ENCODE measurements at regions of chr7 and their contacts with region 1.

Region 1: DNA sequence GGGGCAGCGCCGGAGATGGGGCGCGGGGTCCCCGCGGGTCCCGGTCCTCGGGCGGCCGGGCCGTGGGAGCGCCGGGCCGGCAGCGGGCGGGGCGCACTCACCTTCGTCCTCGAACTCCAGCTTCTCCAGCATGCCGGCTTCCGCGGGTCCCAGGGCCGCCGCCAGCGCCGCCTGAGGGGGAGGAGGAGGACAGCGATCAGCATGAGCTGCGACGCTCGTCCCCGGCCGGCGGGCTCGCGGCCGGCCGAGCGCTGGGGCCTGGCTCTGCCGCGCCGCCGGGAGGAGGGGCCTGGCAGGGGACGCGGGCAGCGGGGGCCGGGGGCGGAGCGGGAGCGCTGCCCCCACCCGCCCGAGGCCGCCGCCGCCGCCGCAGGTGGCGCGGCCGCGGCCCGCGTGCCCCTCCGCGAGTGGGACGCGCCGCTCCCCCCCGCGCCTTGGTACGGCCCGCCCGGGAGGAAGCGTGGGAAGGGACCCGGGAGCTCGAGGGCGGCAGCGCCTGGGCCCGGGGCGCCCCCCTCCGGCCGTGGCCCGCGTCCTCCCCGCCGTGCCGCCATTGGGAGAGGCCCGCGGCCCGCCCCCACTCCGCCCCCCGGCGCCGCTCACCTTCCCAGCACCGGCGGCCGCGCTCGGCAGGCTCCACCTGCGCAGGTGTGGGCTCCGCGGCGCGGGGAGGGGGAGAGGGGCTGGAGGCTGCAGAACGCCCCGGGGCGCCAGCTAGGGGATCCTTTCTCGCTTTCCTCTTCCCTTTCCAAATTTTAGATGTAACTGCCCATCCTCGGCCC is 112.5 kb upstream of the RHEB start:
- DNase-seq: peak; percentile 64
- ATAC-seq: peak; percentile 89
- H3K4me3 ChIP-seq: peak overlapping the region; percentile 94
- H3K27ac ChIP-seq: peak overlapping the region; percentile 65; the same call in 1 of the 2 replicates
- H3K4me1 ChIP-seq: no peaks in the 10 kb centered on the region; the same call in 1 of the 2 replicates
- H3K27me3 ChIP-seq: no peaks in the 10 kb centered on the region
- CTCF ChIP-seq: peak; percentile 62
- POLR2A ChIP-seq: peak; percentile 34; the same call in 1 of the 2 replicates
- RAD21 ChIP-seq: peak; percentile 57

Region 2: GRCh38 chr7:151519765-151520418 is 112.3 kb before region 1 on chr7 and contains the start of gene RHEB:
- CTCF ChIA-PET with region 1: no interaction called
- POLR2A ChIA-PET with region 1: no interaction called
- dilution Hi-C with region 1: no loop called
- in situ Hi-C with region 1: no loop called
- intact Hi-C with region 1: loop called (anchors 2 kb)
- DNase-seq: peak; percentile 99
- ATAC-seq: peak; percentile 92
- H3K4me3 ChIP-seq: peak within 1 kb of the TSS; percentile 74
- H3K27ac ChIP-seq: peak within 1 kb of the TSS; percentile 91
- H3K4me1 ChIP-seq: peaks cover 2% of the 10 kb centered on the region; the same call in 1 of the 2 replicates
- H3K27me3 ChIP-seq: no peaks in the 10 kb centered on the region
- CTCF ChIP-seq: no peak
- POLR2A ChIP-seq: no peak; the same call in none of the 2 replicates
- RAD21 ChIP-seq: 0 out of 2 replicates have a peak, but pooled peaks have one; percentile 1
- total RNA-seq, gene RHEB: 19.7 and 45.5 TPM in 2 replicates

Region 3: DNA sequence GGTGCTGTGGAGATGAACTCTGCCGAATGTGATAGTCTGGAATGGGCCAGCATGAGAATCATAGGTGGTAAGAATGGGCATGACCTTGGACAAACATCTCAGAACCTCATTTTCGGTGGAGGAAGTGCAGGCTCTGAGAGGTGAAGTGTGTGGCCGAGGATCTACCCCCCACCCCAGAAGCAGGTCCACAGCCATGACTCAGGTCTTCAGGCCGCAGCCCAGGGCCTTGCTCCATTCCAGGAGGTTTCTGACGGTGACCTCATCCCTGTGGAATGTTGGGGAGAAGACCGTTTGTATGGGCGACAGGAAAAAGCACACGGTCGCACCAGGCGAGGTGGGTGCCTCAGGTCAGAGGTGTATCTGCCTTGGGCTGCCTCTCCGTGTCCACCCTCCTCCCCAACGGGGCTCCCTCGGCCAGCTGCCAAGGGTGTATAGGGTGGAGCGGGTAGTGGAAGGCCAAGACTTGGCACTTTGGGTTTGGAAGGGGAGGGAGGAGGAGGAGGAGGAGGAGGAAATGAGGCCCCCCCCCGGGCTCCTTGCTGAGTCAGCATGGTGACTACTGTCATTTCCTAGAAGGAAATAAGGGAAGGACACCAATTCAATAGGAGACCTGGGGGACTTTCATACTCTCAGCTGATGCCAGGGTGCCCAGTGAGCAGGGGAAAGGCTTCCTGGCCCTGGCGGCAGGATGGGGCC is 55.5 kb after region 1 on chr7:
- CTCF ChIA-PET with region 1: no interaction called
- POLR2A ChIA-PET with region 1: no interaction called
- dilution Hi-C with region 1: no loop called
- in situ Hi-C with region 1: no loop called
- intact Hi-C with region 1: loop called (anchors 2 kb)
- DNase-seq: peak; percentile 96
- ATAC-seq: peak; percentile 93
- H3K4me3 ChIP-seq: no peak overlapping the region
- H3K27ac ChIP-seq: peak overlapping the region; percentile 86
- H3K4me1 ChIP-seq: peaks cover 38% of the 10 kb centered on the region
- H3K27me3 ChIP-seq: no peaks in the 10 kb centered on the region
- CTCF ChIP-seq: no peak
- POLR2A ChIP-seq: no peak
- RAD21 ChIP-seq: peak; percentile 13; the same call in 1 of the 2 replicates

Region 4: GRCh38 chr7:151705636-151706276 is 73.6 kb after region 1 on chr7:
- CTCF ChIA-PET with region 1: interaction called, 10 read pairs
- POLR2A ChIA-PET with region 1: no interaction called
- dilution Hi-C with region 1: no loop called
- in situ Hi-C with region 1: no loop called
- intact Hi-C with region 1: no loop called
- DNase-seq: peak; percentile 52
- ATAC-seq: peak; percentile 74
- H3K4me3 ChIP-seq: no peak overlapping the region
- H3K27ac ChIP-seq: no peak overlapping the region
- H3K4me1 ChIP-seq: peaks cover 9% of the 10 kb centered on the region; the same call in 1 of the 2 replicates
- H3K27me3 ChIP-seq: no peaks in the 10 kb centered on the region; the same call in 1 of the 2 replicates
- CTCF ChIP-seq: peak; percentile 55
- POLR2A ChIP-seq: no peak
- RAD21 ChIP-seq: peak; percentile 63